ENCODE measurements at regions of chr17 and their contacts with region 1.

Region 1: GRCh38 chr17:50541716-50542688 is 5.0 kb upstream of the SPATA20 start:
- DNase-seq: peak; percentile 94

Region 2: DNA sequence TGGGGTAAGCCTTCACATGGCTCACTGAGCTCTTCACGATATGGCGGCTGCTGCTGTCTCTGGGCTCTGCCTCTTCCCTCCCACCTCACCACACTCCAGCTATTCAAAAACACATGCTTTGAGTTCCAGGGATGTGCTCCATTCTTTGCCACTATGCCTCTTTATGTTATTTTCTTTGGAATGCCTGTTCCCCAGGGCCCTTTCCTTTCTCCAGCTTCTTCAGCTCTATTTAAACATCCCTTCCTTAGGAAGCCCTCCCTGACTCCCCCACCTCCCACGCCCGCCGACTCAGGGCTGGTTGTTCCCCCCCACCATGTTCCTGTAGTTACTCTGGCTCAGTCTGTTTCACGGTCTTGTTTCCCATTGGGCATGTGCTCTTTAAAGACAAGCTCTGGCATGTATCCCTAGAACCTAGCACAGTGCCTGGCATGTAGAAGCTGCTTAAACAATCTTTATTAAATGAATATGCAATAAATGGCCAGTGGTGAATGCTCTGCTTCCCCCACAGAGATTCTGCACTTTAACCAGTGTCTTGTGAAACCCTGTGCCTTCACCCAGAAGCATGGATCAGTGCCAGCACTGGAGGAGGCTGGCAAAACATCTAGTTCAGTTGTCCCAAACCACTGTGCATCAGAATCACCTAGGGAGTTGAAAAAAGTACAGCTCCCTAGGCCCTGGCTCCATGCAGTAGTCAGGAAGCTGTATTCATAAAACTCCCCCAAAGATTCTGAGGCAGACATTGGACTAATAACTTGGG is 26.9 kb before region 1 on chr17:
- intact Hi-C with region 1: no loop called
- DNase-seq: no peak

Region 3: DNA sequence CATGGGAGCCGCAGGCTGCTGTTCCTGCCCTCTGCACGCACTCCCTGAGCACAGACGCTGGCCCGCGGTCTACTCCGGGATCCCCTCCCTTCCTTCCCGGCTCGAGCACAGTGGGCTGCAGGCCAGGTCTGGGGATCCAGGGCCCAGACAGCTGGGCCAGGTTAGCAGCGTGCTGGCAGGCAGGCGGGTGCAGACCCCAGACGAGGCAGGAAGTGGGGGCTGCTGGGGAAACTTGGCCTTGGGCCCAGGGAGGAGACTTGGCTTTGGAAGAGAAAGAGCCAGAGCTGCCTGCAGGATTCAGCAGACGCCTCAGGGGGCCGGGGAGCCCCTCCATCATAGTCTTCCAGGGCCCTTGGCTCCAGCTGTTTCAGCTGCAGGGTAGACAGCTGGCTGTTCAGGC is 62.5 kb after region 1 on chr17:
- intact Hi-C with region 1: no loop called
- DNase-seq: peak; percentile 87

Region 4: GRCh38 chr17:50686494-50687199 is 144.6 kb after region 1 on chr17:
- intact Hi-C with region 1: loop called in 1 of 2 experiments (anchors 5 kb)
- DNase-seq: peak; percentile 94

Region 5: GRCh38 chr17:50697663-50698274 is 155.8 kb after region 1 on chr17:
- intact Hi-C with region 1: loop called (anchors 5 kb)
- DNase-seq: no peak

Region 6: GRCh38 chr17:51120739-51121617 is 579.0 kb after region 1 on chr17 and contains the start of gene SPAG9:
- intact Hi-C with region 1: no loop called
- DNase-seq: peak; percentile 99
- total RNA-seq, gene SPAG9: 88.4 to 126 TPM